ENCODE measurements at regions of chr15 and their contacts with region 1.

Region 1: GRCh38 chr15:68672781-68673205 is 94.0 kb downstream of the CORO2B start:
- DNase-seq: peak in 1 of 2 experiments; percentile 29
- ATAC-seq: peak; percentile 45 to 60; a peak in 3 of 6 replicates
- H3K4me3 ChIP-seq: no peak overlapping the region
- H3K27ac ChIP-seq: no peak overlapping the region
- H3K4me1 ChIP-seq: no peaks in the 10 kb centered on the region
- CTCF ChIP-seq: peak; percentile 28; the same call in 2 of the 3 replicates
- EP300 ChIP-seq: no peak
- POLR2A ChIP-seq: no peak
- RAD21 ChIP-seq: peak; percentile 27 to 53; a peak in 2 of 5 replicates

Region 2: DNA sequence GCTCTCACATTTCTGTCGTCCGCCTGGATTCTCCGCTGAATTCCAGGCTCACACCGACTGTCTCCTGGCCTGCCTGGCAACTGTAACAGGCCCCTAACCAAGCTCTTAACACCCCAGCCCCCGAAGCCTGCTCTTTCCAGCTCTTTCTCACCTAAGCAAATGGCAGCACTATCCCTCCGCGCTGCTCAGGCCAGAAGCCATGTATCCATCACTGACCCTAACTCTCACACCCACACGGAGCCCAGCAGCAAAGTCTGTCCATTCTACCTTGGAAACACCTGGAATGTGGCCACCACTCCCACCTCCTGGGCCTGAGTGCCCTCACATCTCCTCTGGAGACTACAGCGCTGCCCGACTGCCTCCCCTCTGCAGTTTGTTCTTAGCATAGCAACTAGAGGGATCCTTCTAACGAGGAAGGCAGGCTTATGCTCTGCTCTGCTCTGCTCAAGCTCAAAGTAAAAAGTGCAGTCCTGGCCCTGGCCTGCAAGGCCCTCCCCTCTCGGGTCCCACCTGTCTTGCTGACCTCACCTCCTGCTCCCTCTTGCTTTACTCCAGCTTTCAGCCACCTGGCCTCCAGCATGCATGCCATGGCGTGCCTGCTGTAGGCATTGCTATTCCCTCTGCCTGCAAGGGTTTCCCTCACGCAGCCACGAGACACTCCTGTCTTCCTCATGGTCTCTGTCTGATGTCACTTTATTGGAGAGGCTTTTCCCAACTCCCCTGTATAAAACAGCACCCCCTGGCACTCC is 368.0 kb before region 1 on chr15:
- CTCF ChIA-PET with region 1: interaction called, 184 read pairs
- POLR2A ChIA-PET with region 1: interaction called, 5 read pairs
- DNase-seq: no peak
- ATAC-seq: peak; percentile 10 to 11; a peak in 3 of 6 replicates
- H3K4me3 ChIP-seq: no peak overlapping the region
- H3K27ac ChIP-seq: peak overlapping the region in 1 of 2 experiments; percentile 58; a peak in 2 of 6 replicates
- H3K4me1 ChIP-seq: peaks cover 47% of the 10 kb centered on the region
- CTCF ChIP-seq: no peak
- EP300 ChIP-seq: no peak
- POLR2A ChIP-seq: no peak
- RAD21 ChIP-seq: no peak

Region 3: GRCh38 chr15:68449389-68449788 is 223.4 kb before region 1 on chr15:
- CTCF ChIA-PET with region 1: no interaction called
- POLR2A ChIA-PET with region 1: no interaction called
- DNase-seq: no peak
- ATAC-seq: no peak
- H3K4me3 ChIP-seq: no peak overlapping the region
- H3K27ac ChIP-seq: no peak overlapping the region
- H3K4me1 ChIP-seq: no peaks in the 10 kb centered on the region
- CTCF ChIP-seq: no peak
- EP300 ChIP-seq: no peak
- POLR2A ChIP-seq: no peak
- RAD21 ChIP-seq: no peak

Region 4: GRCh38 chr15:68536331-68537095 is 136.3 kb before region 1 on chr15:
- CTCF ChIA-PET with region 1: interaction called, 11 read pairs
- POLR2A ChIA-PET with region 1: no interaction called
- DNase-seq: no peak
- ATAC-seq: peak in 1 of 2 experiments; percentile 62; a peak in 1 of 6 replicates
- H3K4me3 ChIP-seq: no peak overlapping the region
- H3K27ac ChIP-seq: peak overlapping the region; percentile 15 to 55; a peak in 5 of 6 replicates
- H3K4me1 ChIP-seq: peaks cover 15% of the 10 kb centered on the region; the same call in 1 of the 3 replicates
- CTCF ChIP-seq: no peak
- EP300 ChIP-seq: no peak
- POLR2A ChIP-seq: no peak
- RAD21 ChIP-seq: no peak

Region 5: DNA sequence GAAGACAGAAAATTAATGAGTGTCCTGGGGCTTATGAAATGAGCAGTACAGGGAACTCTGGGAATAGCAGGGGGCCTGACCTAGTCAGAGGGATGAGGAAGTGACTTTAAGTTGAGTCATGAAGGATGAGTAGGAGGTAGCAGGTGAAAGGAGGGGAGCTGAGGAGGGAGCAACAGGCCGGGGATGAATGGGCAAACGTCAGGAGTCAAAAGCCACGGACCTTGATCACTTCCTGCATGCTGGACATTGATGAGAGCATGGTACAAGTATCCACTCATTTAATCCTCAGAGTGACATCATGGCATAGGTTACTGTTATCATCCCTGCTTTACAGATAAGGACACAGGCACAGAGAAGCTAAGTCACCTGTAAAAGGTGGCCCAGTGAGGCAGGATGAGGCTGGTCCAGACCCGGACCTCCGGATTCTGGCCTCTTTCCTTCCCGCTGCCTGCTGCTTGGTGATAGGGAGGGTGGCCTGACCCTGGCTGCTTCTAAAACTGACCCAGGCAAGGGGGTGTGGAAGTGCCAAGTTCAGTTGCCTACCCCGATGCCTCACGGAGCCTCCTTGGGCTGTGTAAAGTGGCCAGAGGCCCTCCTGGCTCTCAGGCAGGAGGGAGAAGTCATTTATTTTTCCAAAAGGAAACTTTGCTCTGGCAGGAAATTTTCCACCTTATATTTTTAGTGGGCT is 86.4 kb before region 1 on chr15:
- CTCF ChIA-PET with region 1: interaction called, 33 read pairs
- POLR2A ChIA-PET with region 1: no interaction called
- DNase-seq: peak; percentile 68 to 80
- ATAC-seq: peak; percentile 78 to 87
- H3K4me3 ChIP-seq: no peak overlapping the region
- H3K27ac ChIP-seq: peak overlapping the region; percentile 38 to 72; a peak in 5 of 6 replicates
- H3K4me1 ChIP-seq: peaks cover 14% of the 10 kb centered on the region
- CTCF ChIP-seq: no peak
- EP300 ChIP-seq: no peak
- POLR2A ChIP-seq: no peak
- RAD21 ChIP-seq: no peak

Region 6: GRCh38 chr15:68644077-68644904 is 28.5 kb before region 1 on chr15:
- CTCF ChIA-PET with region 1: interaction called, 205 read pairs
- POLR2A ChIA-PET with region 1: no interaction called
- DNase-seq: peak; percentile 48 to 71
- ATAC-seq: no peak
- H3K4me3 ChIP-seq: no peak overlapping the region
- H3K27ac ChIP-seq: peak overlapping the region; percentile 54 to 71
- H3K4me1 ChIP-seq: peaks cover 29% of the 10 kb centered on the region
- CTCF ChIP-seq: no peak
- EP300 ChIP-seq: no peak
- POLR2A ChIP-seq: no peak
- RAD21 ChIP-seq: no peak

Region 7: GRCh38 chr15:68691705-68692104 is 18.9 kb after region 1 on chr15:
- CTCF ChIA-PET with region 1: interaction called, 29 read pairs
- POLR2A ChIA-PET with region 1: no interaction called
- DNase-seq: no peak
- ATAC-seq: no peak
- H3K4me3 ChIP-seq: no peak overlapping the region
- H3K27ac ChIP-seq: no peak overlapping the region
- H3K4me1 ChIP-seq: no peaks in the 10 kb centered on the region
- CTCF ChIP-seq: no peak
- EP300 ChIP-seq: no peak
- POLR2A ChIP-seq: no peak
- RAD21 ChIP-seq: no peak

Region 8: GRCh38 chr15:68924866-68925560 is 252.2 kb after region 1 on chr15:
- CTCF ChIA-PET with region 1: interaction called, 27 read pairs
- POLR2A ChIA-PET with region 1: no interaction called
- DNase-seq: peak; percentile 78 to 90
- ATAC-seq: peak; percentile 96 to 98
- H3K4me3 ChIP-seq: no peak overlapping the region
- H3K27ac ChIP-seq: no peak overlapping the region
- H3K4me1 ChIP-seq: no peaks in the 10 kb centered on the region
- CTCF ChIP-seq: peak; percentile 97
- EP300 ChIP-seq: no peak
- POLR2A ChIP-seq: no peak
- RAD21 ChIP-seq: peak; percentile 96 to 98

Measured in A549 (cell line).